OCI-LY7 (cell line): ENCODE measurements at regions of chr1 and their contacts with region 1.

Region 1: GRCh38 chr1:101667761-101668160 is 329.0 kb downstream of the OLFM3 start:
- DNase-seq: no peak
- H3K4me3 ChIP-seq: no peak overlapping the region
- H3K27ac ChIP-seq: no peak overlapping the region
- H3K4me1 ChIP-seq: no peaks in the 10 kb centered on the region
- CTCF ChIP-seq: no peak

Region 2: DNA sequence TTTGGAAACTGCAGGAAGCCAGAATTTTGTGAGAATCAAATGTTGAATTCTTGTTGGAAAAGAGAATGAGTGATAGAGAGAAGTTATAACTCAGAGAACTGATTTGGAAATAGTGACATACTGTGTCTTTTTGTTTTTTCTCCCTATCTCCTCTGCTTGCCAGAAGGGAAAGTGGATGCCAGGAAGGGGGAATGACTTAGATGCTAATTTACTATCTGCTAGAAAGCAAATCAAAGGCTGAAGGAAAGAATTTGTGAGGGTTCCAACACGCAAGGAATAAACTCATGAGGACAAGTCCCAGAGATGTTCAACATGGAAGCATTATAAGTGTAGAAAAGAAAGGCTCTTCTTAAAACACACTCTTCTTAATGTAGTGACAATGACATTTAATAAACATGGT is 1469.2 kb before region 1 on chr1:
- CTCF ChIA-PET with region 1: no interaction called
- POLR2A ChIA-PET with region 1: interaction called, 10 read pairs
- intact Hi-C with region 1: no loop called
- DNase-seq: no peak
- H3K4me3 ChIP-seq: no peak overlapping the region
- H3K27ac ChIP-seq: no peak overlapping the region
- H3K4me1 ChIP-seq: no peaks in the 10 kb centered on the region
- CTCF ChIP-seq: no peak

Region 3: GRCh38 chr1:101653482-101653946 is 14.2 kb before region 1 on chr1:
- CTCF ChIA-PET with region 1: no interaction called
- POLR2A ChIA-PET with region 1: no interaction called
- intact Hi-C with region 1: no loop called
- DNase-seq: peak; percentile 2
- H3K4me3 ChIP-seq: no peak overlapping the region
- H3K27ac ChIP-seq: no peak overlapping the region
- H3K4me1 ChIP-seq: no peaks in the 10 kb centered on the region
- CTCF ChIP-seq: peak; percentile 48

Region 4: DNA sequence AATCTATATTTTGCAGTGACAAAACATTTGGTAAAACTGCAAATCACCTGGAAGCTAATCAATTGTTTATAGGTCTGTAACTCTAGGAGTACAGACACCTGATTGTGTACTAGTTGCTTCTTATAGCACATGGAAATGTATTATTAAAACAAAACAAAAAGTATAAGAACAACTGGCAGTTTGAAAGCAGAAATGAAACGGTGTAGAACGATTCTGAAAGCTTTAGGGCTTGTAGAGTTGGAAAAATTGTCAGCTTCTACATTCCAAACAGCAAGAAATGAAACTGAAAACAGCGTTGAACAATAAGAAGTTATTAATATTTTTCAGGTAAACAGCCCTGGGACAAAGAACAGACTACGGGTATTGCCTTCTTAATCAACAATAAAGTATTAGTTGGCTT is 55.7 kb after region 1 on chr1:
- CTCF ChIA-PET with region 1: no interaction called
- POLR2A ChIA-PET with region 1: no interaction called
- intact Hi-C with region 1: loop called (anchors 5 kb)
- DNase-seq: no peak
- H3K4me3 ChIP-seq: no peak overlapping the region
- H3K27ac ChIP-seq: no peak overlapping the region
- H3K4me1 ChIP-seq: no peaks in the 10 kb centered on the region
- CTCF ChIP-seq: no peak

Region 5: GRCh38 chr1:101769520-101769919 is 101.8 kb after region 1 on chr1:
- CTCF ChIA-PET with region 1: no interaction called
- POLR2A ChIA-PET with region 1: no interaction called
- intact Hi-C with region 1: no loop called
- DNase-seq: peak; percentile 36
- H3K4me3 ChIP-seq: no peak overlapping the region
- H3K27ac ChIP-seq: no peak overlapping the region
- H3K4me1 ChIP-seq: no peaks in the 10 kb centered on the region
- CTCF ChIP-seq: peak; percentile 75